ENCODE measurements at regions of chr3 and their contacts with region 1.

Region 1: DNA sequence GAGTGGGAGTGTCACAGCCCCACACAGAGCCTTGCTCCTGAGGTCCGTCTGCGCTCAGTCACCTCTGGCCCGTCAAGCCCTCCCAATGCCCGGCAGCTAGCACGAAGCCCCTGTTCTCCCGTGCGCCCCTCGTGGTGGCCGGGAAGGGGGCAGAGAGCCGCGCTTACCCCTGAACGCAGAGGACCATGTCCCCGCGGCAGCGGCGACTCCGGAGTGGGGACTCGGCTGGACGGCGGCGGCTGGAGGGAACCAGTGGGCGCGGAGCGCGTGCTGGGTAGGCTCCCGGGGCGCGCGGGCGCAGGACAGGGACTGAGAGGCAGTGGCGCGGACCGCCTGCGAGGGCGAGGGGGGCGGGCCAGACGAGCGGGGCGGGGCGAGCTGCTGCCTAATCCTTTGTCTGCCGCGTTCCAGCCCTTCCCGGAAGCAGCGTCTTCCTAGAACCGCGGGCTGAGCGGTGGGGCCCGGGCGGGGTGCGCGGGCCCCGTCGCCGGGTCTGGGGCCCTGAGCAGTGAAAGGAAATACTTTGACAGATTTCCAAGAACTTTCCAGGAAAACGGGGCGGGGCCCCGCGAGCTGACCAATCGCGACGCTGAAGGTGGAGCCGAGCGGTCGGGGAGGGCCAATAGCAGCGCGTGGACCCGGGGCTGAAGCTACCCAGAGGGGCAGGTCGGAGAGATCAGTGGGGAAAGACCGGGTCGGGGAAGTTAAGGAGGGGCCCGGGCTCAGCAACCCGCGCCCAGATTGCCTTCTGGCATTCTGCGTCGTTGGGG is at the start of gene CISH:
- DNase-seq: peak; percentile 99
- H3K4me3 Mint-ChIP-seq: peak within 1 kb of the TSS; percentile 98
- H3K27ac Mint-ChIP-seq: peak within 1 kb of the TSS; percentile 99
- H3K4me1 Mint-ChIP-seq: peaks cover 33% of the 10 kb centered on the region
- H3K27me3 Mint-ChIP-seq: peaks cover 19% of the 10 kb centered on the region

Region 2: DNA sequence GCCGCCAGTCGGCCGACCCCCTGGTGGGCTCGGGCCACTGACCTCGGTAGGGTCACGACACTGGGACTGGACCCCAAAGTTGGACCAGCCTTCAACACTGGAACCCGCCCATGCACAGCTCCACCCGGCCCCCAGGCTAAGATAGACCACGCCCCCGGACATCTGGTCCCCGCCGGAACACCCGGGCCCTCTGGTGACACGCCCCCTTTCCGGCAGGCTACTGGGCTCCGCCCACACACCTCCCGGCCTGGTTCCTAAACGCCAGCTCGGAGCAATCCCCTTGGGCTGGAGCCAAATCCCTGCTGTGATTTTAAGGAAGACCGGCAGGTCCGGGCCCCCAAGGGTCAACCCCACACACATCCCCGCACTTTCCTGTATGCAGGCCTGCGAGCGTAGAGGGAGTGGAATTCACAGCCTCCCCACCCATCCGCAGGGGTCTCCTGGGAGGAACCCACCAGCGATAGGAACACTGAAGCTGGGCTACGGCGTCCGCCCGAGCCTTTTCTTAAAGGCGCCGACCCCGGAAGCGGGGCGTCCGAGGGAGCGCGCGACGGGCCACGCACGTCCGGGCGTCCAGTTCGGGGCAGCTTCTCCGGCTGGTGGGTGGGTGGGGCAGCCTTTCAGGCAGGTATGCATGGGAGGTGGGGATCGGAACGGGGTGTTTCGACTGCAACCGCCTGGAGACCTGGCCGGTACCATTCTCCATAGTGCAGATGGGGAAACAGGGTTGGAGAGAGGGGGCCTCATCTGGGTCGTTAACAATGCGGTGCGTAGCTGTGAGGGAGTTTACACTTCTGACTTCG is 42.5 kb before region 1 on chr3 and contains the start of gene HEMK1:
- CTCF ChIA-PET with region 1: interaction called, 753 read pairs
- DNase-seq: peak; percentile 97
- H3K4me3 Mint-ChIP-seq: peak within 1 kb of the TSS; percentile 99
- H3K27ac Mint-ChIP-seq: peak within 1 kb of the TSS; percentile 92
- H3K4me1 Mint-ChIP-seq: peaks cover 76% of the 10 kb centered on the region
- H3K27me3 Mint-ChIP-seq: no peaks in the 10 kb centered on the region

Region 3: GRCh38 chr3:50600841-50601591 is 10.6 kb before region 1 on chr3:
- CTCF ChIA-PET with region 1: interaction called, 34 read pairs
- DNase-seq: peak; percentile 89
- H3K4me3 Mint-ChIP-seq: peak overlapping the region; percentile 98
- H3K27ac Mint-ChIP-seq: peak overlapping the region; percentile 99
- H3K4me1 Mint-ChIP-seq: peaks cover 86% of the 10 kb centered on the region
- H3K27me3 Mint-ChIP-seq: peaks cover 5% of the 10 kb centered on the region

Region 4: DNA sequence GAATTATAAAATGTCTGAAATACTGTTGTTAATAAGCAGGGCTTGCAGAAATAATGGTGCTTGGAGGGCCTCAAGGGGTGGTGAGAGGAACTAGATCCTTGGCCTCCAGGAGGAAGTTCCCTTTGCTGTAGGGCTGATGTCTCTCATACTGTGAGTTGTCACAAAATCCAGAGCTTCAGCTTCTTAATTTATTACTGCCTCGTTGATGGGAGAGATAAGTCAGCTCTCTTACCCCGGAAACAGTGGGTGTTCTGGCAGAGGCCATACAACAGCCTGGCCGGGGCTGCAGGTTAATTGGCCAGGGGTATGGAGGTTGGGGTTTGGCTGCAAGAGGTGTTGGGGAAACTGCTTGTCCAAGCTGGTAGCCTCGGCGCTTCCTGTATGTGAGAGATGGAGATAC is 20.8 kb after region 1 on chr3:
- CTCF ChIA-PET with region 1: interaction called, 11 read pairs
- DNase-seq: no peak
- H3K4me3 Mint-ChIP-seq: no peak overlapping the region
- H3K27ac Mint-ChIP-seq: peak overlapping the region; percentile 84
- H3K4me1 Mint-ChIP-seq: peaks cover 89% of the 10 kb centered on the region
- H3K27me3 Mint-ChIP-seq: no peaks in the 10 kb centered on the region

Region 5: GRCh38 chr3:50840983-50841489 is 229.4 kb after region 1 on chr3:
- CTCF ChIA-PET with region 1: no interaction called
- DNase-seq: no peak
- H3K4me3 Mint-ChIP-seq: no peak overlapping the region
- H3K27ac Mint-ChIP-seq: no peak overlapping the region
- H3K4me1 Mint-ChIP-seq: no peaks in the 10 kb centered on the region
- H3K27me3 Mint-ChIP-seq: no peaks in the 10 kb centered on the region

Region 6: GRCh38 chr3:50971487-50971924 is 359.9 kb after region 1 on chr3:
- CTCF ChIA-PET with region 1: interaction called, 14 read pairs
- DNase-seq: peak; percentile 70
- H3K4me3 Mint-ChIP-seq: no peak overlapping the region
- H3K27ac Mint-ChIP-seq: no peak overlapping the region
- H3K4me1 Mint-ChIP-seq: peaks cover 14% of the 10 kb centered on the region
- H3K27me3 Mint-ChIP-seq: peaks cover 4% of the 10 kb centered on the region

Region 7: GRCh38 chr3:51384726-51385473 is 773.3 kb after region 1 on chr3 and contains the start of gene MANF:
- CTCF ChIA-PET with region 1: interaction called, 31 read pairs
- DNase-seq: peak; percentile 99
- H3K4me3 Mint-ChIP-seq: peak within 1 kb of the TSS; percentile 99
- H3K27ac Mint-ChIP-seq: peak within 1 kb of the TSS; percentile 97
- H3K4me1 Mint-ChIP-seq: peaks cover 54% of the 10 kb centered on the region
- H3K27me3 Mint-ChIP-seq: no peaks in the 10 kb centered on the region